Activated naive CD4-positive, alpha-beta T cell treated with anti-CD3 and anti-CD28 coated beads for 36 hours (primary cell): ENCODE measurements at regions of chr14 and their contacts with region 1.

Region 1: DNA sequence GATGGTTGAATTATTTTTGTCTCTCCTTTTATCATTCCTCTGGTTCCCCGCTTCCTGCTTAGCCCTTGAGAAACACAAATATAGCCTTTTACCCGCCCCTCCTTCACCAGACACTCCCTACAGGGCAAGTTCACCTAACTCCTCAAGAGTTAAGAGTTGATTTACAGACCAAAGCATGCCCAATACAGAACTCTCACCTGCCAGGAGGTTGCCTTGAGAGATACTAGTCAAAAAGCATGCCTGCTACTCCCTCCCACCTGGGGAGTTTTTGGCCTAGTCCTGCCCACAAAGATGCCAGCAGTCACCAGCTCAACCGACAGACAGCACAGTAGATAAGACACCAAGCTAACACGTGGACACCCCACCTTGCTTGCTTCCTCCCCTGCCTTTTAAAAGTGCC is 11.2 kb downstream of the LGMN start:
- DNase-seq: no peak
- H3K4me3 Mint-ChIP-seq: no peak overlapping the region
- H3K27ac Mint-ChIP-seq: no peak overlapping the region
- H3K4me1 Mint-ChIP-seq: peaks cover 11% of the 10 kb centered on the region
- H3K27me3 Mint-ChIP-seq: no peaks in the 10 kb centered on the region

Region 2: DNA sequence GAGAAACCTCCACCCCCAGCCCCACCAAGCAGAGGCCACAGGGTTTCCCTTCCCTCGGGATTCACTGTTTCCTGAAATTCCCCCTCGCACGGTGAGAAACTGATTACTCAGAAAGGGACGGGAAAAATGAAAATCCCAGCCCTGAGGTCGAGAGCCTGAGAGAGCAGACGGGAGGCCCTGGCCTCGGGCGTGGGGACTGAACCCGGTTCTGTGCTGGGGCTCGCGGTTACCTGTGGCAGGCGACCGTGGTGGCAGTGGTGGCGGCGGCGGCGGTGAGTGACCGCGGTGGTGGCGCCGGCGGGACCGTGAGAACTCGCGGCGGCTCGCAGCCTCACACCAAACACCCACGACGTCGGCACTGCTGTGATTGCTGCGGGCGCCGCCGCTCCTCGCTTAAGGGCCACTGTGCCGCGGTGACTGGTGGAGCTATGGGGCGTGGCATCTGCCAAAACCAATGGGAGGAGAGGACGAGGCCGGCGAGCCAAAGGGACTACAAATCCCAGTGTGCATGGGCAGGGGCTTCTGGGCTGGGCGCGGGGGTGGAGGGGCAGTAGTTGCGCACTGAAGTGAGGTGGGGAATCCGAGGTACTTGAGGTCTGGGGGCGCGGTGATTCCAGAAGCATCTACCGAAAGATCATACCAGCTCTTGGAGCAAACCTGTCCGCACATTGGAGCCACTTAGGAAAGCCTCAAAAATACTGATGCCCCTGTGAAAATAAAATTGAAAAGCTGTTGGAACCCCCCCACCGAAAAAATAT is 11.2 kb after region 1 on chr14 and contains the start of gene LGMN:
- CTCF ChIA-PET with region 1: interaction called, 4 read pairs
- intact Hi-C with region 1: loop called (anchors 1 kb)
- DNase-seq: peak; percentile 90
- H3K4me3 Mint-ChIP-seq: peak within 1 kb of the TSS; percentile 81
- H3K27ac Mint-ChIP-seq: no peak within 1 kb of the TSS
- H3K4me1 Mint-ChIP-seq: peaks cover 35% of the 10 kb centered on the region
- H3K27me3 Mint-ChIP-seq: peaks cover 4% of the 10 kb centered on the region
- total RNA-seq, gene LGMN: 6.9 to 7.7 TPM